ENCODE measurements at regions of chr18 and their contacts with region 1.

Region 1: DNA sequence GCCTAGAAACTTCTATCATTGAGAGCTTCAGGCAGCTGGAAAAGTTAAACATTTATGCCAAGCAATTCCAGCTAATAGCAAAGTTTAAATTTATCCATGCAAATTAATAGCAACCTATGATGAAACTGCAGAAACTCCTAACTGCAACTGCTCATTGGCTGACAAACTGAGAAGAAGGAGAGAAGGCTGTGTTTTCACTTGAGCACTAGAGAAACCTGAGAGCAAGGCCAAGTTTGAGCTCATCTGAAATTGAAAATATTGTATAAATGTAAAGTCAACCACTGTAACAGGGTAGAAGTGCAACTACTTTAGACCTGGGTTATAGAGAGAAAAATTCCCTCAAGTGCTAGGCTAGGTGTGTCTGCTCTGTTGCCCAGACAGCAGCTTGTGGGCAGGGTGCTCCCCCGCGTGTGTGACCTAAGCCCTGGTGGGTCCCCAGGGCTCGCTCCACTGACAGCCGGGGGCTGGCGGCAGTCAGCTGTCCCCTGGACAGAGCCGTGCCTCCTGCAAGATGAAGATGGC is 50.2 kb downstream of the CABYR start:
- DNase-seq: no peak
- H3K4me3 Mint-ChIP-seq: no peak overlapping the region
- H3K27ac Mint-ChIP-seq: no peak overlapping the region
- H3K4me1 Mint-ChIP-seq: no peaks in the 10 kb centered on the region
- H3K27me3 Mint-ChIP-seq: peaks cover 39% of the 10 kb centered on the region

Region 2: DNA sequence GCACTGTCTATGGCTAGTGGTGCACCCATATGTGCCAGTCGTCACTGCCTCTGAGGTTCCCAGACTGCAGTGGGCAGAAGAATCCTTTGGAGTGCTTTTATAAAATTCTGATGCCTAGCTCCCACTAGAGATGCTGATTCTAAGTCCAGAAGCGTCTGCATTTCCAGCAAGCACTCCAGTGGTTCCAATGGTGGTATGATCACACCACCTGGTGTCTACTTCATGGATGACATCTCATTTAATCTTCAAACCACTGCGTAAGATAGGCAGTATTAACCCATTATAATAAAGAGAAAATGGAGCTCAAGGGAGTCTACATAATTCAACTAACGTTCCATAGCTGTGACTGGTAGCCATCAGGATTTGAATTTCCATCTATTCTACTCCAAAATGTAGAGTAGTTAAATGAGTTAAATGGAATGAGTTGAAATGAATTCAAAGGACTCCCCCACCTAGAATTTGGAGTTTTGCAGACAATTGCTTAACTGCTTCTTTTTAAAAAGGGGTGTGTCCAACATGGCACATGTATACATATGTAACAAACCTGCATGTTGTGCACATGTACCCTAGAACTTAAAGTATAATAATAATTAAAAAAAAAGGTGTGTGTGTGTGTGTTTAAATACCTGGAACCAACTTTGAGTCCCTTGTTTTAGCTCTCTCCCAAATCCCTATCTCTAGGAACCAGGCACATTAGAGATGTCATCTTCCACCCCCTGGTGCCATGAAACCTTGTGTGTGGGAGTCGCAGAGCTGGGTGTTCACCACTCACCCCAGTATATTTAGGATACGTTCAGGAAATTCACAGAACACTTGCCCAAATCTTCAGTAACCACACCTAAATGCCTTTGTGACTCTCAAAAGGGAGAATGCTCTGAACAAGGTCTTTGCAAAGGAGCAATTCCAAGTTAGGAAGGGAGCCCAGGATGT is 485.7 kb before region 1 on chr18:
- CTCF ChIA-PET with region 1: no interaction called
- POLR2A ChIA-PET with region 1: no interaction called
- DNase-seq: peak; percentile 22
- H3K4me3 Mint-ChIP-seq: no peak overlapping the region
- H3K27ac Mint-ChIP-seq: no peak overlapping the region
- H3K4me1 Mint-ChIP-seq: peaks cover 2% of the 10 kb centered on the region
- H3K27me3 Mint-ChIP-seq: peaks cover 47% of the 10 kb centered on the region

Region 3: DNA sequence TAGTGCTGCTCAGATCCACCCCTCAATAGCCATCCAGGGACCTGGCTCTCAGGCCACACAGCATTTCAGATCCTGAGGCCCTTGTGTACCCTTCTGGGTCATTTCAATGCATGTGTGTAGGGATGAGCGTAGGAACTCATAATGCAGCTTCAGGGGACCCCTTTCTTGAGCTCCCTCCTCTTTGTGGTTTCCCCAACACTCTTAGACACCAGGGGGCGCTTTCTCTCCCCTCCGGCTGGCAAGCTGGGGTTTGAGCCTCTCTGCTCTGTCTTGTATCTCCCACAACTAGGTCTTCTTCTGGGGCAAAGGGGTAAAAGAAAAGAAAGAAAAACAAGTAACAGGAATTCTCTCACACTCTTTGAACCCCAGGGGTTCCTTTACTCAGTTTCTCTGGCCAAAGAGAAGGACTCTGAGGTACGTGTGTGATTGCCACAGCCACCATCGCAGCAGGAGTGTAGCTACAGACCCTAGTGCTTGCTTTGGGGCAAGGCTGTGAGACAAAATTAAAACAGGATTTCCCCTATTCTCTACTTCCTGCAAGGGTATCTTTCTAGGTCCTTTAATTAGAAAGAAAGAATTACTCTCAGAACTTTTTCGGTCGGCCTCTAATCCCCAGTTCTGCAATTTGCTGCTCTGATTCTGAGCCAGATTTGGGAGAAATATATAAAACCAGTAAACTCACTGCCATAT is 12.2 kb before region 1 on chr18:
- CTCF ChIA-PET with region 1: interaction called, 16 read pairs
- POLR2A ChIA-PET with region 1: no interaction called
- DNase-seq: peak; percentile 44
- H3K4me3 Mint-ChIP-seq: no peak overlapping the region
- H3K27ac Mint-ChIP-seq: no peak overlapping the region
- H3K4me1 Mint-ChIP-seq: peaks cover 6% of the 10 kb centered on the region
- H3K27me3 Mint-ChIP-seq: peaks cover 3% of the 10 kb centered on the region

Measured in activated CD4-positive, alpha-beta memory T cell treated with anti-CD3 and anti-CD28 coated beads, Interleukin-2, amount 10 ng/mL, durations not matched to agents 7 days and 5 days (primary cell).